Activated B cell treated with CpG ODN at 0.5 μM for 24 hours (primary cell): ENCODE measurements at regions of chr6 and their contacts with region 1.

Region 1: GRCh38 chr6:52475307-52475706 is 55.2 kb downstream of the EFHC1 start:
- DNase-seq: no peak
- ATAC-seq: no peak
- H3K4me3 Mint-ChIP-seq: no peak overlapping the region
- H3K27ac Mint-ChIP-seq: no peak overlapping the region
- H3K4me1 Mint-ChIP-seq: peaks cover 2% of the 10 kb centered on the region
- H3K27me3 Mint-ChIP-seq: no peaks in the 10 kb centered on the region
- CTCF ChIP-seq: no peak

Region 2: GRCh38 chr6:52317841-52318581 is 157.3 kb before region 1 on chr6:
- CTCF ChIA-PET with region 1: no interaction called
- POLR2A ChIA-PET with region 1: no interaction called
- intact Hi-C with region 1: no loop called
- DNase-seq: no peak
- ATAC-seq: peak; percentile 73
- H3K4me3 Mint-ChIP-seq: no peak overlapping the region
- H3K27ac Mint-ChIP-seq: peak overlapping the region; percentile 54
- H3K4me1 Mint-ChIP-seq: peaks cover 16% of the 10 kb centered on the region
- H3K27me3 Mint-ChIP-seq: no peaks in the 10 kb centered on the region
- CTCF ChIP-seq: no peak

Region 3: GRCh38 chr6:52419809-52420670 is 55.3 kb before region 1 on chr6 and contains the start of gene EFHC1:
- CTCF ChIA-PET with region 1: no interaction called
- POLR2A ChIA-PET with region 1: no interaction called
- intact Hi-C with region 1: no loop called
- DNase-seq: peak; percentile 97
- ATAC-seq: peak; percentile 90
- H3K4me3 Mint-ChIP-seq: no peak within 1 kb of the TSS
- H3K27ac Mint-ChIP-seq: no peak within 1 kb of the TSS
- H3K4me1 Mint-ChIP-seq: peaks cover 16% of the 10 kb centered on the region
- H3K27me3 Mint-ChIP-seq: no peaks in the 10 kb centered on the region
- CTCF ChIP-seq: no peak
- total RNA-seq, gene EFHC1: 15.8 and 23.2 TPM in 2 replicates

Region 4: DNA sequence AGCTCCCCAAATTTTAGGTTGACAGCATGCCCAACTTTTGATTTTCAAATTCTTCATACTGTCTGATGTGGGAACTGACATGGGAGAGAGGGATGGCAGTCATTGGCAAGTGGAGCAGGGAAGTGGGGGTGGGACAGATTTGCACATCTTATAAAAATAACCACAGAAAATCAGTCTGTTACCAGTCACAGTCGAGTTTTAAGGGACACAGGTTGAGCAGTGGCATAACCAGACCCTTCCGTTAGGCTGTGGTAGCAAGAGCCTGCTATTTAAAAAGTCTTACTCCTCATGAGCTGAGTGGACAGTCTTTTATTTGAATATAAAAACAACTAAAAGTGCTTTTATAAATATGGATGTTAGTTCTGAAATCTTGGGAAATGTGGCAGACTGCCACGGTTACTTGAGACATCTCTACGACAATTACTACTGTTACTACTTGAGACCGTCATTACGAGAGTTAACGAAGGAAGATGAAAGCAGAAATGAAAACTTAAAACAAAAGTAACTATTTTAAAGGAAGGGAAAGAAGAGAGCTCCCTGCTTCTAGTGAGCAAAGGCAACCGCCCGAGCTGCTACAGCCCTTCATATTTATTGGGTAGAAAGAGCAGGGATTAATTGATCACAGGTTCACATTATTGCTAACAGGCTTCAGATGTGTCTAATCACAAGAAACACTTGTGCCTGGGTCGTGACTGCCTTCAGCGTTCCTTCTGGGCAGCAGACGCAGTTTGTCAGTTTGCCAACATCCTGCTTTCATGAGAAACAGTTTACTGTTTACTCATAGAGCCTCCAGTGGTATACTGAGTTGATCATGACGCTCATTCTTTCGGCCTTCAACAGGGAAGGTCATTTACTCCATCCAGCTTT is 16.1 kb after region 1 on chr6:
- CTCF ChIA-PET with region 1: no interaction called
- POLR2A ChIA-PET with region 1: no interaction called
- intact Hi-C with region 1: loop called (anchors 2 kb)
- DNase-seq: no peak
- ATAC-seq: peak; percentile 57
- H3K4me3 Mint-ChIP-seq: peak overlapping the region; percentile 71
- H3K27ac Mint-ChIP-seq: peak overlapping the region; percentile 86
- H3K4me1 Mint-ChIP-seq: peaks cover 68% of the 10 kb centered on the region
- H3K27me3 Mint-ChIP-seq: no peaks in the 10 kb centered on the region
- CTCF ChIP-seq: no peak

Region 5: GRCh38 chr6:52712136-52712535 is 236.8 kb after region 1 on chr6:
- CTCF ChIA-PET with region 1: no interaction called
- POLR2A ChIA-PET with region 1: no interaction called
- intact Hi-C with region 1: no loop called
- DNase-seq: no peak
- ATAC-seq: no peak
- H3K4me3 Mint-ChIP-seq: no peak overlapping the region
- H3K27ac Mint-ChIP-seq: no peak overlapping the region
- H3K4me1 Mint-ChIP-seq: no peaks in the 10 kb centered on the region
- H3K27me3 Mint-ChIP-seq: peaks cover 16% of the 10 kb centered on the region
- CTCF ChIP-seq: no peak